Mammary epithelial cell (primary cell): ENCODE measurements at regions of chr17 and their contacts with region 1.

Region 1: DNA sequence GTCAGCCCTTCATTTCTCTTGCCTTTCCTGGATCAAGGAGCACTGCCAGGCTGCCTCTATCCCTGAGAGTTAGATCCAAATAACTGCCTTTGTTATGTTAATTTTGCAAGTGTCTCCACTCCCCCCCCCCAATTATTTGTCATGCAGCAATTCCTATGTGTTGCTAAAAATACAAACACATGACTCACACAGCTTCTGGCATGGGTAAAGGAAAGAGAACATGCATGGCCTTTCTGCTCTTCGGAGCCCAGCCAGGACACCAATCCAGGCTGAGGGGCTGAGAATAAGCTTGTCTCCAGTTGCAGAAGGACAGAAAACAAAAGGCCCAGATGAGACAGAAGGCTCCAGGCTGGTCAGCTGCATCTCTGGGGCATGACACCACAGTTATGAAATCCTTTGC is 148.0 kb upstream of the TNRC6C start:
- DNase-seq: no peak
- H3K4me3 ChIP-seq: no peak overlapping the region
- H3K27ac ChIP-seq: no peak overlapping the region
- H3K4me1 ChIP-seq: no peaks in the 10 kb centered on the region
- H3K27me3 ChIP-seq: no peaks in the 10 kb centered on the region
- CTCF ChIP-seq: no peak

Region 2: DNA sequence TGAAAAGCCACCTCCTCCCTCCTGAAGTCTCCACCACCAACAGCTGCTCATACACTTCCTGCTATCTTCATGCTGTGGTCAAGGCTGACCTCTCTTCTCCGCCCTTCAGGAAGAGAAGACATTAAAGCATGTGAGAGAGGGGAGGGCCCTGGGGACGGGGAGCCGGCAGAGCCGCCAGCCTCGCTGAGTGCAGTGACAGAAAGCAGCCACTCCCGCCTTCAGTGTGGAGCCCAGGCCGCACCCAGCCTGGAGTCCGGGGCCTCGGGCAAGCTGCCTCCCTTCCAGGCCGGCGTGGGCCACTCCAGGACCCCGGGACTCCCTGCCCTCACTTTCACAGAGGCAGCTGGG is 53.3 kb after region 1 on chr17:
- CTCF ChIA-PET with region 1: no interaction called
- dilution Hi-C with region 1: loop called (anchors 5 kb)
- in situ Hi-C with region 1: no loop called
- intact Hi-C with region 1: no loop called
- DNase-seq: no peak
- H3K4me3 ChIP-seq: no peak overlapping the region
- H3K27ac ChIP-seq: no peak overlapping the region
- H3K4me1 ChIP-seq: no peaks in the 10 kb centered on the region
- H3K27me3 ChIP-seq: no peaks in the 10 kb centered on the region
- CTCF ChIP-seq: no peak

Region 3: DNA sequence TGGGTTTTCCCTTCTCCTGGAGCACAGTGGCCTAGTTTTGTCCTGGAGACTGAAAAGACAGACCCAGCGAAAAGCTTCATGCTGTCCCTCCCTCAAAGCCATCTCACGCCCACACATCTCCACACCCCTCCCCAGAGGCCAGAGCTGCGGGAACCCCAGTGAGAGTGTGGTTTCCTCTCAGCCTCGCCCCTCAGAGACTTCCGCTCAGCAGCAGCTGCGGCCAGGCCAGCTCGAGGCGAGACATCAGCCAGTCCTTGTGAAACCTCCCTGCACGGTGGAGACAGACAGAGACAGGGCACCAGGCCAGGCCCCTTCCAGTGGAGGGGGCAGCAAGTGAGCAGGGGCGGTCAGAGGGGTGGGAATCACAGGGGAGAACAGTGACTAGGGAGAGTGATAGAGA is 71.0 kb after region 1 on chr17:
- CTCF ChIA-PET with region 1: no interaction called
- dilution Hi-C with region 1: loop called (anchors 5 kb)
- in situ Hi-C with region 1: no loop called
- intact Hi-C with region 1: no loop called
- DNase-seq: peak; percentile 55
- H3K4me3 ChIP-seq: no peak overlapping the region
- H3K27ac ChIP-seq: no peak overlapping the region
- H3K4me1 ChIP-seq: peaks cover 19% of the 10 kb centered on the region
- H3K27me3 ChIP-seq: no peaks in the 10 kb centered on the region
- CTCF ChIP-seq: no peak

Region 4: GRCh38 chr17:77914385-77915254 is 104.1 kb after region 1 on chr17:
- CTCF ChIA-PET with region 1: no interaction called
- dilution Hi-C with region 1: no loop called
- in situ Hi-C with region 1: no loop called
- intact Hi-C with region 1: no loop called
- DNase-seq: no peak
- H3K4me3 ChIP-seq: no peak overlapping the region
- H3K27ac ChIP-seq: no peak overlapping the region
- H3K4me1 ChIP-seq: no peaks in the 10 kb centered on the region
- H3K27me3 ChIP-seq: no peaks in the 10 kb centered on the region
- CTCF ChIP-seq: peak; percentile 9 to 26